ENCODE measurements at regions of chr15 and their contacts with region 1.

Region 1: GRCh38 chr15:29728418-29728817 is 93.8 kb downstream of the TJP1 start:
- DNase-seq: no peak
- ATAC-seq: no peak
- H3K4me3 ChIP-seq: no peak overlapping the region
- H3K27ac ChIP-seq: no peak overlapping the region
- H3K4me1 ChIP-seq: no peaks in the 10 kb centered on the region
- H3K27me3 ChIP-seq: no peaks in the 10 kb centered on the region
- CTCF ChIP-seq: no peak
- EP300 ChIP-seq: no peak
- POLR2A ChIP-seq: no peak
- RAD21 ChIP-seq: no peak

Region 2: GRCh38 chr15:29674661-29675533 is 53.5 kb before region 1 on chr15:
- CTCF ChIA-PET with region 1: no interaction called
- POLR2A ChIA-PET with region 1: no interaction called
- RAD21 ChIA-PET with region 1: no interaction called
- SMC1A ChIA-PET with region 1: no interaction called
- in situ Hi-C with region 1: no loop called
- intact Hi-C with region 1: loop called (anchors 5 kb)
- DNase-seq: no peak
- ATAC-seq: no peak
- H3K4me3 ChIP-seq: no peak overlapping the region
- H3K27ac ChIP-seq: no peak overlapping the region
- H3K4me1 ChIP-seq: no peaks in the 10 kb centered on the region
- H3K27me3 ChIP-seq: no peaks in the 10 kb centered on the region
- CTCF ChIP-seq: no peak
- EP300 ChIP-seq: no peak
- POLR2A ChIP-seq: no peak
- RAD21 ChIP-seq: no peak

Region 3: GRCh38 chr15:29692527-29692926 is 35.9 kb before region 1 on chr15:
- CTCF ChIA-PET with region 1: no interaction called
- POLR2A ChIA-PET with region 1: no interaction called
- RAD21 ChIA-PET with region 1: no interaction called
- SMC1A ChIA-PET with region 1: no interaction called
- in situ Hi-C with region 1: no loop called
- intact Hi-C with region 1: no loop called
- DNase-seq: no peak
- ATAC-seq: no peak
- H3K4me3 ChIP-seq: no peak overlapping the region
- H3K27ac ChIP-seq: no peak overlapping the region
- H3K4me1 ChIP-seq: no peaks in the 10 kb centered on the region
- H3K27me3 ChIP-seq: no peaks in the 10 kb centered on the region
- CTCF ChIP-seq: peak in 2 of 3 experiments; percentile 5 to 8; a peak in 1 of 6 replicates
- EP300 ChIP-seq: no peak
- POLR2A ChIP-seq: no peak
- RAD21 ChIP-seq: no peak

Region 4: DNA sequence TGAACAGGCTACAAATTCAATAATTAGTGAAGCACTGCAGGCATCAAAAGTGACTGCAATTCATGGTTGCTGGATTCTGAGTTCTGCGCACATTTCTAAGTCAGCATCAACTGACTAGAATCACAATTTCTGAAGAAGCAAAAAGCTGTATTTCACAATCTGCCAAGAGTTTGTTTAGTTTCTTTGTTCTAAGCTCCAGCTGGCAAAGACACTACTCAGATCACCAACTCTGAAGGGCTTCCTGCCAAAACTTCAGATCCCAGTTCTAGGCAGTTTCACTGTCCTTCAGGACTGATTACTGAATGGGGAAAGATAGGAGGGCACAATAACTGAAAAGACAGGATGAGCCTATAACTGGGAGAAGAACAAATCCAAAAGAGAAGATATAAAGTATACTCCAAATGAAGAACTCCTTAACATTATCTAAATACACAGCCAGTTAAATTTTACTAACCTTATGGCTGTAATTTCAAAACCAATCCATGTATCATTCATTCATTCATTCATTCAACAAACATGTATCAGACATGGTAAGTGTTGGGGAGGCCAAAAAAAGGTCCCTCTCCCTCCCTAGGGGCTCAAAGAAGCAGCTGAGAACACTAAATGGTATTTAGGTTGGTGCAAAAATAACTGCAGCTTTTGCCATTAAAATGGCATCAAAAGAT is 76.8 kb after region 1 on chr15:
- CTCF ChIA-PET with region 1: no interaction called
- POLR2A ChIA-PET with region 1: no interaction called
- RAD21 ChIA-PET with region 1: no interaction called
- SMC1A ChIA-PET with region 1: no interaction called
- in situ Hi-C with region 1: no loop called
- intact Hi-C with region 1: no loop called
- DNase-seq: no peak
- ATAC-seq: no peak
- H3K4me3 ChIP-seq: no peak overlapping the region
- H3K27ac ChIP-seq: no peak overlapping the region
- H3K4me1 ChIP-seq: no peaks in the 10 kb centered on the region
- H3K27me3 ChIP-seq: no peaks in the 10 kb centered on the region
- CTCF ChIP-seq: no peak
- EP300 ChIP-seq: no peak
- POLR2A ChIP-seq: no peak
- RAD21 ChIP-seq: no peak

Region 5: GRCh38 chr15:29859973-29860715 is 131.7 kb after region 1 on chr15:
- CTCF ChIA-PET with region 1: no interaction called
- POLR2A ChIA-PET with region 1: no interaction called
- RAD21 ChIA-PET with region 1: no interaction called
- SMC1A ChIA-PET with region 1: no interaction called
- in situ Hi-C with region 1: no loop called
- intact Hi-C with region 1: no loop called
- DNase-seq: no peak
- ATAC-seq: no peak
- H3K4me3 ChIP-seq: no peak overlapping the region
- H3K27ac ChIP-seq: no peak overlapping the region
- H3K4me1 ChIP-seq: no peaks in the 10 kb centered on the region
- H3K27me3 ChIP-seq: no peaks in the 10 kb centered on the region
- CTCF ChIP-seq: no peak
- EP300 ChIP-seq: no peak
- POLR2A ChIP-seq: no peak
- RAD21 ChIP-seq: no peak